Activated naive CD4-positive, alpha-beta T cell treated with anti-CD3 and anti-CD28 coated beads, Interleukin-2, amount 10 ng/mL, durations not matched to agents 7 days and 5 days (primary cell): ENCODE measurements at regions of chrX and their contacts with region 1.

Region 1: GRCh38 chrX:19904778-19905367 is 17.5 kb upstream of the SH3KBP1 start:
- DNase-seq: peak; percentile 39
- H3K4me3 Mint-ChIP-seq: no peak overlapping the region
- H3K27ac Mint-ChIP-seq: no peak overlapping the region
- H3K4me1 Mint-ChIP-seq: peaks cover 30% of the 10 kb centered on the region
- H3K27me3 Mint-ChIP-seq: no peaks in the 10 kb centered on the region

Region 2: GRCh38 chrX:19990556-19991349 is 85.9 kb after region 1 on chrX and contains the start of gene BCLAF3:
- CTCF ChIA-PET with region 1: interaction called, 13 read pairs
- DNase-seq: peak; percentile 86
- H3K4me3 Mint-ChIP-seq: peak within 1 kb of the TSS; percentile 84
- H3K27ac Mint-ChIP-seq: peak within 1 kb of the TSS; percentile 71
- H3K4me1 Mint-ChIP-seq: peaks cover 28% of the 10 kb centered on the region
- H3K27me3 Mint-ChIP-seq: peaks cover 4% of the 10 kb centered on the region

Region 3: DNA sequence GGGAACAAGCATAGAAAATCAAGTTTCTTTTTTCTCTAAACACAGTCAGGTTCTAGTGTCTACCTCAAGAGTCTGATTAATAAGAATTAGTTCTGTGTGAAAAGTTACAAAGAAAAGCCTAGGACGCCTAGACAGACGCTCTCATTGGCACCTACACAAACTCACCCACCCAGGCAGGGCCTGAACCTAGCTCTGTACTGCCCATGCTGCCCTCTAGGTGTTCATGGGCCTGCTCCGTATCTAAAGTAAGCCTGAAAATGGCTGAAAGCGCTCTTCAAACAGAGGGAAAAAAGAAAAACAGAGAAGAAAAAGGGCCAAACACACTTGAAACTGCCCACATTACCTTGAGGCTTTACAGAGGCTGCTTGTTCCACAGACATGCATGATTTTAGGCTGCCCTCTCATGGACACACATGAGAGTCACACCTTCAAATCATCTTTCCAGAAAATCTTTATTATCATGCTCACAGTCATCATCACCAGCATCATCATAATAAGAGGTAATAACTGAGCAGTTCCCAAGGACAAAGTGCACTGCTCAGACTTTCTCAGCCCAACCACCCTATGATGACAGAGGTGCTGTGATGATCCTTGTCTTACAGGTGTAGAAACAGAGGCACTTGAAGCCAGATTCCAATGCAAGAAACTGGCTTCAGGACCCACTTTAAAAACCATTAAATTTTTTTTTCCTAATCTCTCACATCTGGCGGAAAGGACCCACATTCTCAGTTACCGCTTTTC is 162.3 kb after region 1 on chrX:
- CTCF ChIA-PET with region 1: interaction called, 26 read pairs
- DNase-seq: peak; percentile 34
- H3K4me3 Mint-ChIP-seq: no peak overlapping the region
- H3K27ac Mint-ChIP-seq: no peak overlapping the region
- H3K4me1 Mint-ChIP-seq: peaks cover 2% of the 10 kb centered on the region
- H3K27me3 Mint-ChIP-seq: peaks cover 9% of the 10 kb centered on the region